GM10248 (cell line): ENCODE measurements at regions of chr1 and their contacts with region 1.

Region 1: DNA sequence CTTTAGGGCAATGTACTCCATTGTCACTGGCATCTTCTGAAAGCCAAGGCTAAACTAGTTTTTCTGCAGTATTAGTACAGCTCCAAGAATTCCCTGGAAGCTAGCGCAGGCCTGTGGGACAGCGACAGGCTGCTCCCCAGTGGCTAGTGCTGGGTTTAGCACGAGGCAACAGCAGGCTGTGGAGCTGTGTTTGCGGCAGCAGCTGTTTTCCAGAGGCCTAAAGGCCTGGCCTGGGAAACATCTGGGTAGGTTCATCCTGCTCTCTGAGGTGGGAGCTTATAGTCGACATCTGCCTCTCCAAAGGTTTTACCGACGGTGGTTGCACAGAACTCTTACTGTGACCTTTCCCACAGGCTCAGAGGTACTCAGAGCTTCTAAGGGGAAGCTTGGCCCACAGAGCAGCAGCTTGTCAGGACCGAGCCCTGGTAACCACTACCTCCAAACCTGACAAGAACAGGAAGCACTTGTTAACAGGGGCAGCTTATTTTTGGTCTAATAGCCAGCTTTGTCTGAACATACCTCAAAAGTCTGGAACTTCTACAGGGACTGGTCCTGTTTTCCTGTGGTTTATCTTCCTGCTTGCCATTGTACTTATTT is 17.2 kb downstream of the CC2D1B start:
- DNase-seq: no peak
- CTCF ChIP-seq: peak; percentile 17

Region 2: GRCh38 chr1:52153898-52154297 is 194.9 kb before region 1 on chr1:
- CTCF ChIA-PET with region 1: no interaction called
- POLR2A ChIA-PET with region 1: no interaction called
- DNase-seq: no peak
- CTCF ChIP-seq: no peak

Region 3: GRCh38 chr1:52359676-52360594 is 11.1 kb after region 1 on chr1:
- CTCF ChIA-PET with region 1: interaction called, 10 read pairs
- POLR2A ChIA-PET with region 1: interaction called, 3 read pairs
- DNase-seq: no peak
- CTCF ChIP-seq: no peak